MCF 10A (cell line): ENCODE measurements at regions of chr5 and their contacts with region 1.

Region 1: GRCh38 chr5:8908055-8908683 is 637.7 kb downstream of the SEMA5A start:
- DNase-seq: peak; percentile 62
- H3K4me3 Mint-ChIP-seq: no peak overlapping the region
- H3K27ac Mint-ChIP-seq: peak overlapping the region; percentile 94
- H3K4me1 Mint-ChIP-seq: peaks cover 37% of the 10 kb centered on the region
- H3K27me3 Mint-ChIP-seq: no peaks in the 10 kb centered on the region
- CTCF ChIP-seq: peak; percentile 65

Region 2: DNA sequence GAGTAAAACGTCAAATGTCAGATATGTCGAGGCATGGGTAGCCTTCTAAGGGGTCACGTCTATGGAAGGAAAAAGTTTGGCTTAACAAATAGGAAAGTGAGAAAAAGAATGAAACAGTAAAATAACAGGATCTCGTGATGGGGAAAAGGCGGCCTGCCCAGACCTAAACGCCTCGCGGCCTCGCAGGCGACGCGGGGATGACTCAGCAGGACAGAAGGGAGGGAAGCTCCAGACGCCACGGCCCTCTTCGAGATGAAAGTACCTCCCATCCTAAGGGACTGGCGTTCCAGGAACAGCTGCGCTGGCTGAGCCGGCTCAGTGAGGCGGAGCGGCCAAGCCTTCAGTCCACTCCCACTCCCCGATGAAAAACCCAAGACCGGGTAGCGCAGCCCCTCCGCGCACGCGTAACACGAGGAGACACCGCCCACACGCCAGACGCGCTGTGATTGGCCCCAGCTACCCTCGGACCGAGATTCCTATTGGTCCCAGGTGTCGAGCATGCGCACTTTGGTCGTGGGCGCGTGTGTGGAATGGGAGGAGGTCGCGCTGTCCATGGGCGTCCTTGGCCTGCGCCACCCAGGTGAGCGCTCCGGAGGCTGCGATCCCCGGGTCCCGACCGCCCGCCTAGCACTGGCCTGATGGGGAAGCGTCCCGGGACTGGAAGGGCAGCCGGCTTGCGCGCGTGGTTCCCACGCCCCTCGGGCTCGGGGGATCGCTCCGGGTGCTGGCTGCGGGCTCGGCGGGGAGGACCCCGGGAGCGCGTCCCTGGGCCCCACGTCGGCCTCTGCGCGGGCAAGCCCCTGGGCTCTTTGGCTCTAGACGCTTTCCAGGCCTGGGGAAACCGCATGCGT is 450.8 kb before region 1 on chr5:
- CTCF ChIA-PET with region 1: no interaction called
- POLR2A ChIA-PET with region 1: interaction called, 6 read pairs
- intact Hi-C with region 1: loop called (anchors 5 kb)
- DNase-seq: peak; percentile 98
- H3K4me3 Mint-ChIP-seq: peak overlapping the region; percentile 92
- H3K27ac Mint-ChIP-seq: peak overlapping the region; percentile 83
- H3K4me1 Mint-ChIP-seq: peaks cover 14% of the 10 kb centered on the region
- H3K27me3 Mint-ChIP-seq: no peaks in the 10 kb centered on the region
- CTCF ChIP-seq: no peak

Region 3: DNA sequence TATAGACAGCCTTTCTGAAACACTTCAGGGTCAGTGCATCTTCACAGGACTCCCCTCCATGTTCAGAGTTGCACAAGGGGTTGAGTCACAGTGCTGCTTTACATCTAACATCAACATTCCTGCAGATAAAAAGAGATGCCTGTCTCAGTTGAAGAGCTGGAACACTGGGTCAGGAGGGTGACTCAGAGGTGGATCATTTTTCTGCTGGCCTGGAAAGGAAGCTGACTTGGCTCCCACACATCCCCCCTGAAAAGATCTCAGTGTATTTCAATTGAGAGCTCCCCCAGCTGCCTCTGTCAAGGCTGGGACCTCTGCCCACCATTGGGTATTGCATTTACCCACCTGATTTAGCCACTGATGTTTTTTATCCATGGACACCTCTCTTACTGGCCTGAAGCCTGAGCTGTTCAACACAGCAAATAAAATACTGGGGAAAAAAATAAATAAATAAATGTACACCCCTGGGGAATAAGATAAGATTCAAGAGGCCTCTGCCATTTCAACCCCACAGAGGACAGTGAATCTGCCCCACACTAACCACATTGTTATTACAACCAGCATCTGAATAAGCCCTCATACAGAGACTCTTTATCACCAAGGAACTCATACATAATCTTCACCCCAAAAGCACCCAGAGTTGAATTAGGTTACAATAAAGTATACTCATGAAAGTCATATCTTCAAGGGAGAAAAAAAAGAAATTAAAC is 78.7 kb before region 1 on chr5:
- CTCF ChIA-PET with region 1: interaction called, 5 read pairs
- POLR2A ChIA-PET with region 1: interaction called, 5 read pairs
- intact Hi-C with region 1: loop called (anchors 5 kb)
- DNase-seq: peak; percentile 96
- H3K4me3 Mint-ChIP-seq: no peak overlapping the region
- H3K27ac Mint-ChIP-seq: peak overlapping the region; percentile 71
- H3K4me1 Mint-ChIP-seq: peaks cover 41% of the 10 kb centered on the region
- H3K27me3 Mint-ChIP-seq: no peaks in the 10 kb centered on the region
- CTCF ChIP-seq: no peak

Region 4: GRCh38 chr5:8864053-8864452 is 44.1 kb before region 1 on chr5:
- CTCF ChIA-PET with region 1: no interaction called
- POLR2A ChIA-PET with region 1: no interaction called
- intact Hi-C with region 1: loop called (anchors 5 kb)
- DNase-seq: peak; percentile 58
- H3K4me3 Mint-ChIP-seq: no peak overlapping the region
- H3K27ac Mint-ChIP-seq: no peak overlapping the region
- H3K4me1 Mint-ChIP-seq: peaks cover 5% of the 10 kb centered on the region
- H3K27me3 Mint-ChIP-seq: no peaks in the 10 kb centered on the region
- CTCF ChIP-seq: peak; percentile 69

Region 5: DNA sequence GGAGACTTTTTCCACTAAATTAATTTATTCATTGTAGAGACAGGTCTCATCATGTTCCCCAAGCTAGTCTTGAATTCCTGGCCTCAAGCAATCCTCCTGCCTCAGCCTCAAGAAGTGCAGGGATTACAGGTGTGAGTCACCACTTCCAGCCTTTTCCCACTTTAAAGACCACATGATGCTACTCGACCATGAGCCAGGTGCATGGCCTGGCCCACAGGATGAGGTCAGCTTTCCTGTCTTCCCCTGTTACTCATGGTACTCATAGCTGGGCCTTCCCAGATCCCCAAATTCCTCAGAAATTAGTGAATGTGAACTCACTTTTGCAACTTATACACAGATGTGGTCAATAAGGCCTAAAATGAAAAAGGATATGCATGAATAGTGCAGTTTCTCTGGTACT is 241.8 kb after region 1 on chr5:
- CTCF ChIA-PET with region 1: no interaction called
- POLR2A ChIA-PET with region 1: no interaction called
- intact Hi-C with region 1: loop called (anchors 1 kb)
- DNase-seq: peak; percentile 82
- H3K4me3 Mint-ChIP-seq: no peak overlapping the region
- H3K27ac Mint-ChIP-seq: no peak overlapping the region
- H3K4me1 Mint-ChIP-seq: peaks cover 4% of the 10 kb centered on the region
- H3K27me3 Mint-ChIP-seq: no peaks in the 10 kb centered on the region
- CTCF ChIP-seq: no peak

Region 6: GRCh38 chr5:9207817-9208418 is 299.7 kb after region 1 on chr5:
- CTCF ChIA-PET with region 1: interaction called, 3 read pairs
- POLR2A ChIA-PET with region 1: no interaction called
- intact Hi-C with region 1: loop called (anchors 2 kb)
- DNase-seq: peak; percentile 63
- H3K4me3 Mint-ChIP-seq: no peak overlapping the region
- H3K27ac Mint-ChIP-seq: peak overlapping the region; percentile 82
- H3K4me1 Mint-ChIP-seq: peaks cover 15% of the 10 kb centered on the region
- H3K27me3 Mint-ChIP-seq: no peaks in the 10 kb centered on the region
- CTCF ChIP-seq: peak; percentile 58